Ascending aorta (tissue), 2 donors: ENCODE measurements at regions of chr1 and their contacts with region 1.

Region 1: GRCh38 chr1:37946703-37947360 is at the start of gene INPP5B:
- DNase-seq: peak; percentile 79 to 95
- H3K4me3 ChIP-seq: peak within 1 kb of the TSS; percentile 90 to 91
- H3K27ac ChIP-seq: peak within 1 kb of the TSS; percentile 94
- H3K4me1 ChIP-seq: peaks cover 0 to 18% of the 10 kb centered on the region in 2 donors
- H3K27me3 ChIP-seq: no peaks in the 10 kb centered on the region
- CTCF ChIP-seq: peak in 1 of 3 experiments; percentile 13
- total RNA-seq, gene INPP5B: 11.7 TPM

Region 2: DNA sequence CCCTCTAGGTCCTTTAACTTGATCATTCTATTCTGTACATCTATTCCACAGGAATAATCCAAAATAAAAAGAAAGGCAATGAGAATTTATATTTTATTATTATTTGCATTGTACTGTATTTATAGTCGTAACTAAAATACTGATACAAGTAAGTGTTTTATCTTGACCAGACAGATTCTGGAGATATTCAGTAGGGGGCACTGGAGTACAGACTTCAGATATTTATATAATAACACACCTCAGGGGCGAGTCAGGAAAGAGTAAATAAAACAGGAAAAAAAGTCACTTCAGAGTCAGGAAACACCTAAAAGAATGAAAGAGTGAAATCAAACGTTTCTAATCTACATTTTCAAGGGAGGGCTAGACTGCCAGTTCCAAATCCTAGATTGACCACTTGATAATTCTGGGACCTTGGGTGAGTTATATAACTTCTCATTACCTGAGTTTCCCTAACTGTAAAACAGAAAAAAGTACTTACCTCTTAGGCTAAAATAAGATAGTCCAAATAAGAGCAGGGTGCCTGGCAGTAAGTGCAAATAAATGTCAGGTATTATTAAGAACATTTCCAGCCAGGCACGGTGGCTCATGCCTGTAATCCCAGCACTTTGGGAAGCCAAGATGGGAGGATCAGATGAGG is 56.3 kb before region 1 on chr1:
- intact Hi-C with region 1: loop called (anchors 2 kb)
- DNase-seq: no peak
- H3K4me3 ChIP-seq: no peak overlapping the region
- H3K27ac ChIP-seq: peak overlapping the region; percentile 34 to 62
- H3K4me1 ChIP-seq: no peaks in the 10 kb centered on the region
- H3K27me3 ChIP-seq: no peaks in the 10 kb centered on the region
- CTCF ChIP-seq: peak; percentile 41 to 69 (median 51)

Region 3: GRCh38 chr1:37989361-37989930 is 42.6 kb after region 1 on chr1:
- intact Hi-C with region 1: loop called (anchors 5 kb)
- DNase-seq: peak in 1 of 2 donors; percentile 68
- H3K4me3 ChIP-seq: peak overlapping the region; percentile 72 to 92
- H3K27ac ChIP-seq: peak overlapping the region; percentile 51 to 76
- H3K4me1 ChIP-seq: peaks cover 7 to 14% of the 10 kb centered on the region in 2 donors
- H3K27me3 ChIP-seq: no peaks in the 10 kb centered on the region
- CTCF ChIP-seq: no peak